ENCODE measurements at regions of chr5 and their contacts with region 1.

Region 1: GRCh38 chr5:176415952-176416924 is at the start of gene CLTB:
- DNase-seq: peak; percentile 37
- ATAC-seq: peak; percentile 99
- H3K4me3 ChIP-seq: peak within 1 kb of the TSS; percentile 96
- H3K27ac ChIP-seq: peak within 1 kb of the TSS; percentile 65
- H3K4me1 ChIP-seq: peaks cover 19% of the 10 kb centered on the region
- H3K27me3 ChIP-seq: no peaks in the 10 kb centered on the region
- CTCF ChIP-seq: peak; percentile 50 to 94 (median 69); a peak in 5 of 6 replicates
- EP300 ChIP-seq: no peak
- POLR2A ChIP-seq: peak; percentile 83
- RAD21 ChIP-seq: peak; percentile 79
- polyA plus RNA-seq, gene CLTB: 1.6 to 4.4 TPM

Region 2: GRCh38 chr5:175729829-175730277 is 686.4 kb before region 1 on chr5:
- CTCF ChIA-PET with region 1: no interaction called
- POLR2A ChIA-PET with region 1: no interaction called
- RAD21 ChIA-PET with region 1: interaction called, 6 read pairs
- SMC1A ChIA-PET with region 1: no interaction called
- in situ Hi-C with region 1: no loop called
- intact Hi-C with region 1: loop called (anchors 10 kb)
- DNase-seq: peak; percentile 20
- ATAC-seq: peak; percentile 100
- H3K4me3 ChIP-seq: no peak overlapping the region
- H3K27ac ChIP-seq: no peak overlapping the region
- H3K4me1 ChIP-seq: no peaks in the 10 kb centered on the region
- H3K27me3 ChIP-seq: no peaks in the 10 kb centered on the region
- CTCF ChIP-seq: peak; percentile 92 to 98 (median 95)
- EP300 ChIP-seq: no peak
- POLR2A ChIP-seq: no peak
- RAD21 ChIP-seq: peak; percentile 94

Region 3: GRCh38 chr5:176429972-176430371 is 13.7 kb after region 1 on chr5:
- CTCF ChIA-PET with region 1: interaction called, 15 read pairs
- POLR2A ChIA-PET with region 1: no interaction called
- RAD21 ChIA-PET with region 1: interaction called, 3 read pairs
- SMC1A ChIA-PET with region 1: no interaction called
- in situ Hi-C with region 1: no loop called
- intact Hi-C with region 1: no loop called
- DNase-seq: no peak
- ATAC-seq: peak; percentile 54
- H3K4me3 ChIP-seq: no peak overlapping the region
- H3K27ac ChIP-seq: no peak overlapping the region
- H3K4me1 ChIP-seq: no peaks in the 10 kb centered on the region
- H3K27me3 ChIP-seq: no peaks in the 10 kb centered on the region
- CTCF ChIP-seq: no peak
- EP300 ChIP-seq: no peak
- POLR2A ChIP-seq: no peak
- RAD21 ChIP-seq: no peak

Region 4: DNA sequence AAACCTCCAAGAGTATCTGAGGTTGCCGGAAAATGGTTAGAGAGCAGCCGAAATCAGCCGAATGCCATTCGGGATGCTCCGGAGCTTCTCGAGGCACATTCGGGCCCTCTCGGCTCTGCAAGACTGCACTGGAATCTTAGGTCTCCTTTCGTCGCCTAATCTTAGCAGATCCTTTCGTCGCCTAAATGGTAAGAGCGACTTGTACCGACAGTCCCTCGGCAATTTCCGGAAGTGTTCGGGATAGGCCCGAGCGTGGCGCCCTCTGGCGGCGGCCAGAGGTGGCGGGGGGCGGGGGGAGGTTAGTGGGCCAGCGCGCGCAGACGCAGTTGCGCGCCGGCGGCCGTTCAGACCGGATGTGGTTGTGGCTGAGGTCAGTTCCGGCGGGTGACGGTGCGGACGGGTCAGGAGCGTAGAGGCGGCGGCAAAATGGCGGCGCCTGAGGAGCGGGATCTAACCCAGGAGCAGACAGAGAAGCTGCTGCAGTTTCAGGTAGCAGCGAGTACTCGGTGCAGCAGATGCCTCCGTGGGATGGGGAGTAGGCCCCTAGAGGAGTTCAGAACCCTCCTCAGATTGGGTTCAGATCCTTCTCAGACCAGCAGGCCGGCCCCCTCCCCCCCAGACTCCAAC is 31.9 kb after region 1 on chr5 and contains the start of gene FAF2:
- CTCF ChIA-PET with region 1: interaction called, 9 read pairs
- POLR2A ChIA-PET with region 1: no interaction called
- RAD21 ChIA-PET with region 1: interaction called, 7 read pairs
- SMC1A ChIA-PET with region 1: interaction called, 3 read pairs
- in situ Hi-C with region 1: no loop called
- intact Hi-C with region 1: loop called (anchors 1 kb)
- DNase-seq: peak; percentile 96
- ATAC-seq: peak; percentile 98
- H3K4me3 ChIP-seq: peak within 1 kb of the TSS; percentile 96
- H3K27ac ChIP-seq: peak within 1 kb of the TSS; percentile 91
- H3K4me1 ChIP-seq: peaks cover 6% of the 10 kb centered on the region; the same call in 1 of the 2 replicates
- H3K27me3 ChIP-seq: no peaks in the 10 kb centered on the region
- CTCF ChIP-seq: peak; percentile 93 to 99 (median 97); a peak in 5 of 6 replicates
- EP300 ChIP-seq: no peak
- POLR2A ChIP-seq: peak; percentile 97
- RAD21 ChIP-seq: no peak
- polyA plus RNA-seq, gene FAF2: 19.0 to 20.7 TPM

Region 5: DNA sequence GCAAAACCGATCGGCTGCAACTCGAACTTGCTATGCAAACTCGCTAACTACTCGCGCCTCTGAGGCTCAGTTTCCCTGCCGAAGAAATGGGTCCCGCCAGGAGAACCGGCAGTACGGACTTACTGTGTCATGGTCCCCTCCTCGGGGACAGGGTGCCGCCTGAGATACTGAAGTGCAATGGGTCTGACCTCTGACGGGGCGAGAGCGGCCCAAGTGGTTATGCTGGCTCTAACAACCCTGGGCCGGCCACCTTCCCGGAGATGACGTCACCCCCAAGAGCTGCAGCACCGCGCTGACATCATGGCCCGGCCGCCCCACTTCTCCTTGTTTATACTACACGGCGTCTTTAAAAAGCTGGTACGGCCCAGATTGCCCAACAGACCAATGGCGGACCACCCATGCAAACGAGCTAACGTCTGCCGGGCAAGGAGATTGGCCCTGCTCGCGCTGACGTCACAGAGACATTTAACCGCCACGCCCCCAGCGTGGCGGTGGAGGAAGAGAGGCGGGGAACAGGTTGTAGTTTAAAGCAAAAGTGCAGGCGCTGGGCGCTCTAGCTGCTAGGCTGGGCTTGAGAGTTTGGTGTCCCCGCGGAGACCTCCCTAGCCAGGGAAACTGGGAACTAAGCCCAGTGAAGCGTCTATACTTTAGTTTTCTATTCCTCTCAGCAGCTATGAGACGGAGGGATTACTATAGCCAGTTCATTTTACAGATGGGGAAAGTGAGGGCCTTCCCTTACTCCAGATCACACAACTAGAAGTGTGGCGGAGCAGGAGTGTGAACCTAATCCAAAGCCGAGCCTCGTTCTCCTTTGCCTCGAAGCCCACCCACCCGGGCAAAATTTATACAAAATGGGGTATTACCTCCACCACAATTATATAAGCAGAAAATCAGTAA is 121.6 kb after region 1 on chr5:
- CTCF ChIA-PET with region 1: interaction called, 18 read pairs
- POLR2A ChIA-PET with region 1: interaction called, 9 read pairs
- RAD21 ChIA-PET with region 1: interaction called, 17 read pairs
- SMC1A ChIA-PET with region 1: interaction called, 9 read pairs
- in situ Hi-C with region 1: no loop called
- intact Hi-C with region 1: loop called (anchors 2 kb)
- DNase-seq: peak; percentile 94
- ATAC-seq: peak; percentile 80
- H3K4me3 ChIP-seq: peak overlapping the region; percentile 99
- H3K27ac ChIP-seq: peak overlapping the region; percentile 95
- H3K4me1 ChIP-seq: peaks cover 38% of the 10 kb centered on the region
- H3K27me3 ChIP-seq: no peaks in the 10 kb centered on the region
- CTCF ChIP-seq: no peak
- EP300 ChIP-seq: no peak
- POLR2A ChIP-seq: no peak
- RAD21 ChIP-seq: no peak

Region 6: DNA sequence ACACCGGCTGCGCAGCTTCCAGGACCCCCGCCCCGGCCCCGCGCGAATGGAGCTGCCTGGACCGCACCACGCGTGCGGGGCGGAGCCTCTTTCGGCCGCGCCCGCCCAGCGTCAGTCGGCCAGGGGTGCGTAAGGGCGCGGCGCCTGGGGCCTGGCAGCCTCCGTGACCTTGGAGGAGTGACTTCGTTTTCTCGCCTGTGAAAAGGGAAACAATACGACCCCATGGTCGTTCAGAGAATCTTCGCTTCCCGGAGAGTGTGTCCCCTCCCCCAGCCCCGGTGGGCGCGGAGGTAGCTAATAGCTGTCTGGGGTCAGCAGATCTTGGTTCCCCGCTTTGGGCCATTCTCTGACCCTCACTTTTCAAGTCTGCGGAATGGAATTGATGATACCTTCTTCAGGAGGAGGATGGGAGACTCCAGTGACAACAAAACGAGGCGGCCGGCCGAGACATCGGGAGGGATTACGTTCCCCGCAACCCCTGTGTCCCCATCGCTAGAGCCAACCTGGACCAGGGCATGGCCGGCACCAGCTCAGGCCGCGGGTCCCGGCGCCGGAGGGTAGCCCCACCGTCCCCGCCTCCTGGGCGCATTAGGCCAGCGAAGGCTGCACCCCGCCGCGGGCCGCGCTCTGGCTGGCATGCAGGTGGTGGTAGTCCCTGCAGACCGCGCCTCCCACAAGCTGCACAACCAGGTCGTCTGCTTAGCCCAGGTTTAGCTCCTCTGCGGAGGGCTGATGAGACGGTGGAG is 127.4 kb after region 1 on chr5:
- CTCF ChIA-PET with region 1: interaction called, 18 read pairs
- POLR2A ChIA-PET with region 1: interaction called, 4 read pairs
- RAD21 ChIA-PET with region 1: interaction called, 17 read pairs
- SMC1A ChIA-PET with region 1: interaction called, 9 read pairs
- in situ Hi-C with region 1: no loop called
- intact Hi-C with region 1: no loop called
- DNase-seq: no peak
- ATAC-seq: peak; percentile 88
- H3K4me3 ChIP-seq: peak overlapping the region; percentile 85
- H3K27ac ChIP-seq: peak overlapping the region; percentile 69
- H3K4me1 ChIP-seq: peaks cover 14% of the 10 kb centered on the region
- H3K27me3 ChIP-seq: no peaks in the 10 kb centered on the region
- CTCF ChIP-seq: no peak
- EP300 ChIP-seq: no peak
- POLR2A ChIP-seq: peak; percentile 53; the same call in 1 of the 2 replicates
- RAD21 ChIP-seq: no peak

Region 7: GRCh38 chr5:176647030-176647866 is 231.0 kb after region 1 on chr5 and contains the start of gene TSPAN17:
- CTCF ChIA-PET with region 1: interaction called, 3 read pairs
- POLR2A ChIA-PET with region 1: no interaction called
- RAD21 ChIA-PET with region 1: no interaction called
- SMC1A ChIA-PET with region 1: interaction called, 3 read pairs
- in situ Hi-C with region 1: no loop called
- intact Hi-C with region 1: loop called (anchors 10 kb)
- DNase-seq: peak; percentile 92
- ATAC-seq: peak; percentile 97
- H3K4me3 ChIP-seq: peak within 1 kb of the TSS; percentile 88
- H3K27ac ChIP-seq: peak within 1 kb of the TSS; percentile 53
- H3K4me1 ChIP-seq: peaks cover 22% of the 10 kb centered on the region
- H3K27me3 ChIP-seq: no peaks in the 10 kb centered on the region
- CTCF ChIP-seq: peak; percentile 7 to 55 (median 32); a peak in 3 of 6 replicates
- EP300 ChIP-seq: no peak
- POLR2A ChIP-seq: peak; percentile 97
- RAD21 ChIP-seq: peak; percentile 43; the same call in 1 of the 2 replicates
- polyA plus RNA-seq, gene TSPAN17: 0.24 to 1.2 TPM